PC-9 (cell line): ENCODE measurements at regions of chr16 and their contacts with region 1.

Region 1: GRCh38 chr16:19138601-19139000 is 24.8 kb downstream of the ITPRIPL2 start:
- DNase-seq: peak; percentile 82 to 84
- H3K4me3 ChIP-seq: no peak overlapping the region
- H3K27ac ChIP-seq: peak overlapping the region; percentile 92; the same call in 1 of the 2 replicates
- H3K4me1 ChIP-seq: peaks cover 59% of the 10 kb centered on the region
- H3K27me3 ChIP-seq: no peaks in the 10 kb centered on the region
- CTCF ChIP-seq: no peak

Region 2: DNA sequence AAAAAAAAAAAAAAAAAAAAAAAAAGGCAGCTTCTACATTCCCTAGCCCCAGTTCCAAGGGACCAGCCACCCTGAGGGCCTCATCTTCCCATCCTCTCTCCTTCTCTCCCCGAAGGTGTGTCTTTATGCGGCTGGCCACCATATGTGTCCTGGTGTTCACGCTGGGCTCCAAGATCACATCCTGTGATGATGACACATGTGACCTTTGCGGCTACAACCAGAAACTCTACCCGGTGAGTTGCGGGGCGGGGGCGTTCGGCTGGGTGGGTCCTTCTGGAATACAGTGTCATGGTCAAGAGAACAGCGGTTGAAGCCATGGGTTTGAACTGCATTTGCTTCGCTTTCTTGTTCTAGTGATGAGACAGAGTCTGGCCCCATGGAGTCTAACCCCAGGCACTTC is 93.8 kb before region 1 on chr16:
- CTCF ChIA-PET with region 1: no interaction called
- POLR2A ChIA-PET with region 1: no interaction called
- intact Hi-C with region 1: no loop called
- DNase-seq: no peak
- H3K4me3 ChIP-seq: no peak overlapping the region
- H3K27ac ChIP-seq: no peak overlapping the region
- H3K4me1 ChIP-seq: no peaks in the 10 kb centered on the region
- H3K27me3 ChIP-seq: no peaks in the 10 kb centered on the region
- CTCF ChIP-seq: no peak

Region 3: GRCh38 chr16:19094541-19095365 is 43.8 kb before region 1 on chr16:
- CTCF ChIA-PET with region 1: interaction called, 5 read pairs
- POLR2A ChIA-PET with region 1: interaction called, 5 read pairs
- intact Hi-C with region 1: loop called (anchors 1 kb)
- DNase-seq: no peak
- H3K4me3 ChIP-seq: no peak overlapping the region
- H3K27ac ChIP-seq: peak overlapping the region; percentile 99
- H3K4me1 ChIP-seq: peaks cover 46% of the 10 kb centered on the region
- H3K27me3 ChIP-seq: no peaks in the 10 kb centered on the region
- CTCF ChIP-seq: no peak

Region 4: DNA sequence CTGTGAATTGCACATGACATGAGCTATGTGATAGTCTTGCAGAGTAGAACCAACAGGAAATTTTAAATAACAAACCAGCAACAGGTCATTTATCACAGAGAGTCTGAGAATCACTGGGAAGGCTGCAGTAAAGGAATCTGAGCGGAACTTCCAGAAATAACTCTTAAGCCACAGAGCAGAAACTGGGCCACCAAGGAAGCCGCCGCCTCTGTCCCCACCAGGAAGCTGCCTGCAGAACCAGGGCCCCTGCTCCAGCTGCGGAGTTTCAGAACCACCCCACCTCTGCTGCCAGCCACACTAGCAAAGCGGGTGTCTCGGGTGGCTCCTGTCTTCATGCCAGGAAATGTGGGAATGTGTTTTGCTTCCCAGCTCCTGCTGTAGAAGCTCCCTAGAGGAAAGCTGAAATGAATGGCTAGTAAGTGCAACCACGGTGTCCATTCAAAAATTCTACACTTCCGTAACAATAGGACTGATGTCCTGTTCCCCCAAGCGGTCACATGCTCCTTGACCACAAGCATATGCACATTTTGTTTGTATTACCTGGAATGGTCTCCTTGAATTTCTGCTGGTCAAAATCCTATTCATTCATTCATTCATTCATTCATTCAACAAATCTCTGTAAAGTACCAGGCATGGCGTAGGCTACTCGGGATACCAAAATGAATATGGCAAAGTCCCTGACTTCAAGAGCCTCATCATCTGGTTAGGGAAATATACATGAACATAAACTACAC is 32.5 kb before region 1 on chr16:
- CTCF ChIA-PET with region 1: interaction called, 7 read pairs
- POLR2A ChIA-PET with region 1: interaction called, 11 read pairs
- intact Hi-C with region 1: no loop called
- DNase-seq: no peak
- H3K4me3 ChIP-seq: no peak overlapping the region
- H3K27ac ChIP-seq: peak overlapping the region; percentile 95
- H3K4me1 ChIP-seq: peaks cover 37% of the 10 kb centered on the region
- H3K27me3 ChIP-seq: no peaks in the 10 kb centered on the region
- CTCF ChIP-seq: no peak

Region 5: GRCh38 chr16:19113453-19114351 is 24.9 kb before region 1 on chr16 and contains the start of gene ITPRIPL2:
- CTCF ChIA-PET with region 1: interaction called, 4 read pairs
- POLR2A ChIA-PET with region 1: interaction called, 25 read pairs
- intact Hi-C with region 1: loop called (anchors 1 kb)
- DNase-seq: peak; percentile 90 to 95
- H3K4me3 ChIP-seq: peak within 1 kb of the TSS; percentile 85
- H3K27ac ChIP-seq: peak within 1 kb of the TSS; percentile 96
- H3K4me1 ChIP-seq: peaks cover 68% of the 10 kb centered on the region
- H3K27me3 ChIP-seq: no peaks in the 10 kb centered on the region
- CTCF ChIP-seq: no peak
- total RNA-seq, gene ITPRIPL2: 117 and 142 TPM in 2 replicates

Region 6: GRCh38 chr16:19118938-19119431 is 19.6 kb before region 1 on chr16:
- CTCF ChIA-PET with region 1: interaction called, 7 read pairs
- POLR2A ChIA-PET with region 1: interaction called, 10 read pairs
- intact Hi-C with region 1: loop called (anchors 1 kb)
- DNase-seq: peak; percentile 73 to 84
- H3K4me3 ChIP-seq: peak overlapping the region; percentile 59
- H3K27ac ChIP-seq: peak overlapping the region; percentile 96
- H3K4me1 ChIP-seq: peaks cover 66% of the 10 kb centered on the region
- H3K27me3 ChIP-seq: no peaks in the 10 kb centered on the region
- CTCF ChIP-seq: no peak

Region 7: DNA sequence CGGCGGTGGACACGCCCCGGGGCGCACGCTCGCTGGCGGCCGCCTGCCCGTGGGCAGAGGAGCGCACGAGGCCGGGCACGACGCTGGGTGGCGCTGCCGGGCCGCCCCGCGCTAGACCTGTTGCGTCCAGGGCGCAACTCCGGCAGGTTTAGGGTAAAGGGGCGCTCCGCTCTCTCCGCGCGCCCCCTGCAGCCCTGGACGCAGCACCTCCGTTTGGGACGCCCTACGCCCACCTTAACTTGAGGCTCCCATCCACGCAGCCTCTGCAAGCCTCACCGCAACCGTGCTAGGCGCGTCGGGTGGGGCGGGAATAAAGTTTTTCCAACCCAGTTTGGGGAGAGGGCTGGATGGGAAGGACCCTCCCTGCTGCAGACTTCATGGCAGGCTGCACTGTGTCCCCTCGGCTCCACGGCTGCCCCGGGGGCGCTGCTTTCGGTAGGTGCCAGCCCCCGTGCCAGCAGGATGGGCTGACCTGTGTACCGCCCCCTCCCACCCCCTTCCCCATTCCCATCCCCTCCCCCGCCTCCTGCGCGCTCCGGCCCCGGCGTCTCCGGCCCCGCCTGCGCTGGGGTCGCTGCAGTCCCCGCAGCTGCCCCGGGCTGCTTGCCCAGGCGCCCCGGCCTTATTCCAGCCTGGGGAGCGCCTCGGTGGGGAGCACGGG is 29.2 kb after region 1 on chr16 and contains the start of gene SYT17:
- CTCF ChIA-PET with region 1: interaction called, 5 read pairs
- POLR2A ChIA-PET with region 1: interaction called, 11 read pairs
- intact Hi-C with region 1: loop called (anchors 1 kb)
- DNase-seq: peak; percentile 60 to 90
- H3K4me3 ChIP-seq: peak within 1 kb of the TSS; percentile 96
- H3K27ac ChIP-seq: 0 out of 2 replicates have a peak within 1 kb of the TSS, but pooled peaks have one; percentile 25
- H3K4me1 ChIP-seq: peaks cover 33% of the 10 kb centered on the region
- H3K27me3 ChIP-seq: no peaks in the 10 kb centered on the region
- CTCF ChIP-seq: peak; percentile 75
- total RNA-seq, gene SYT17: 36.6 and 45.2 TPM in 2 replicates

Region 8: DNA sequence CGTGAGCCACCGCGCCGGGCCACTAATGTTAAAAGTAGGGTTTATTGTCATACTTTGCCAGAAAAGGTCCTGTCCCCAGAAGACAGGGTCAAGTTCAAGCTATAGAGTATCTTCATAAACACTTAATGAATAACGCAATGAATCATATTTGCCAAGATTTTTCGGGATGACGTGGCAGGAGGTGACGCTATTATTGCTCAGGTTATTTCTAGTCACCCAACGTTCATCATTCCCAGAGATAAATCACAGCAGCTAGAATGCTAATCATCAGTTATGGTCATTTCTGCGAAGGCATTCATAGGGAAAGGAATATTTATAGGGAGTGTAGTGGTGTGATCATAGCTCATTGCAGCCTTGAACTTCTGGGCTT is 281.1 kb after region 1 on chr16:
- CTCF ChIA-PET with region 1: no interaction called
- POLR2A ChIA-PET with region 1: interaction called, 19 read pairs
- intact Hi-C with region 1: no loop called
- DNase-seq: peak; percentile 71 to 96
- H3K4me3 ChIP-seq: 0 out of 2 replicates have a peak overlapping the region, but pooled peaks have one; percentile 21
- H3K27ac ChIP-seq: peak overlapping the region; percentile 87
- H3K4me1 ChIP-seq: peaks cover 47% of the 10 kb centered on the region
- H3K27me3 ChIP-seq: no peaks in the 10 kb centered on the region
- CTCF ChIP-seq: no peak